ENCODE measurements at regions of chr2 and their contacts with region 1.

Region 1: GRCh38 chr2:16713011-16713423 is 47.4 kb upstream of the CYRIA start:
- DNase-seq: peak; percentile 80
- ATAC-seq: peak; percentile 79
- H3K4me3 ChIP-seq: peak overlapping the region in 2 of 5 experiments; percentile 12 to 37
- H3K4me3 Mint-ChIP-seq: peak overlapping the region; percentile 52
- H3K27ac ChIP-seq: peak overlapping the region; percentile 77 to 84
- H3K27ac Mint-ChIP-seq: peak overlapping the region; percentile 88
- H3K4me1 ChIP-seq: peaks cover 36 to 44% of the 10 kb centered on the region in 2 donors
- H3K4me1 Mint-ChIP-seq: peaks cover 56% of the 10 kb centered on the region
- H3K27me3 ChIP-seq: no peaks in the 10 kb centered on the region
- H3K27me3 Mint-ChIP-seq: no peaks in the 10 kb centered on the region
- CTCF ChIP-seq: no peak

Region 2: DNA sequence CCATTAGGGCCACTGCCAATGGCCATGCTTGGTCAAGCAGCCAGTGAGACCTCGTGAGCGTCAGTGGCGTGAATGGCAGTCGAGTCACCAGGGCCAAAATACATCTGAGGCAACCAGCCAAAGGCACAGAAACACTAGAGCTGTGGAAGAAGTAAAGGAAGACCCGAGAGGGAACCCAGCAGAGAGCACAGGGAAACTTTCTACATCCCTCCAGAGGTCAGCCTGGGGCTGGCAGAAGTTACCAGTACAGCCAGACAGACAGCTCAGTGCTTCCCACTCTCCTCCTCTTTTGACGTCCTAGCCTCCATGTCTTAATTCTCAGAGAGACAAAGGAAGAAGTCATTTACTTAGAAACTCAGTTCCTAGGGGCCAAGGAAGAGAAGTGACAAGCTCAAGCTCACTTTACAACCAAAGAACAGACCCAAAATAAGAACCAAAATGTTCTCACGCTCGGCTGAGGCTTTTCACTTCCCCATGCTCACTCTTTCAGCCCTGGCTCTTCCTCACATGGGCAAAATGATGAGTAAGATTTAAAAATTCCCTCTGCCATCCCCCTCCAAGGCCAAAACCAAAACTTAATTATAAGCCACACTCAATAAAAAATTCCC is 56.1 kb before region 1 on chr2:
- CTCF ChIA-PET with region 1: interaction called, 3 read pairs
- POLR2A ChIA-PET with region 1: no interaction called
- intact Hi-C with region 1: loop called (anchors 2 kb)
- DNase-seq: peak; percentile 82
- ATAC-seq: peak; percentile 65
- H3K4me3 ChIP-seq: peak overlapping the region in 3 of 5 experiments; percentile 16 to 43 (median 33)
- H3K4me3 Mint-ChIP-seq: peak overlapping the region; percentile 84
- H3K27ac ChIP-seq: peak overlapping the region; percentile 66 to 82
- H3K27ac Mint-ChIP-seq: peak overlapping the region; percentile 86
- H3K4me1 ChIP-seq: peaks cover 96 to 99% of the 10 kb centered on the region in 2 donors
- H3K4me1 Mint-ChIP-seq: peaks cover 98% of the 10 kb centered on the region
- H3K27me3 ChIP-seq: no peaks in the 10 kb centered on the region
- H3K27me3 Mint-ChIP-seq: no peaks in the 10 kb centered on the region
- CTCF ChIP-seq: no peak

Region 3: GRCh38 chr2:16682431-16683118 is 30.4 kb before region 1 on chr2:
- CTCF ChIA-PET with region 1: no interaction called
- POLR2A ChIA-PET with region 1: no interaction called
- intact Hi-C with region 1: no loop called
- DNase-seq: no peak
- ATAC-seq: no peak
- H3K4me3 ChIP-seq: no peak overlapping the region
- H3K4me3 Mint-ChIP-seq: no peak overlapping the region
- H3K27ac ChIP-seq: no peak overlapping the region
- H3K27ac Mint-ChIP-seq: no peak overlapping the region
- H3K4me1 ChIP-seq: peaks cover 0 to 1% of the 10 kb centered on the region in 2 donors
- H3K4me1 Mint-ChIP-seq: peaks cover 21% of the 10 kb centered on the region
- H3K27me3 ChIP-seq: no peaks in the 10 kb centered on the region
- H3K27me3 Mint-ChIP-seq: no peaks in the 10 kb centered on the region
- CTCF ChIP-seq: no peak

Region 4: DNA sequence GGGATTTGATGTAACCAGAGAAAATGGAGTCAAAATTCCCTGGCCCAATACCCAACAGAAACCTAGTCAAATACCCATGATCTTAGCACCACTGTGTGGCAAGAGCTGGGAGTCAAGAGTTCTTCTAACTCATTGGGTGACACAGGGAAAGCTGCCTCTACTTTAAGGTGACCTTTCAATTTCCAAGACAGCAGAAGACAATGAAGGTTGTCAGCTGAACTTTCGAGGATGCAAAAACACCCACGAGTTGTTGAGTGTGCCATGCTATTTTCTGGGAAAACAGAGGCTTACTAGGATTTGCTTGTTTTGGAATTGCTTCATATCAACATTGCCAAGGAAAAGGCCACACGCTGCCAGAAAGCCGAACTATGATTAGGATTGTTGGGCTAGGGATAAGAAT is 14.2 kb after region 1 on chr2:
- CTCF ChIA-PET with region 1: interaction called, 4 read pairs
- POLR2A ChIA-PET with region 1: no interaction called
- intact Hi-C with region 1: loop called (anchors 1 kb)
- DNase-seq: no peak
- ATAC-seq: no peak
- H3K4me3 ChIP-seq: no peak overlapping the region
- H3K4me3 Mint-ChIP-seq: no peak overlapping the region
- H3K27ac ChIP-seq: no peak overlapping the region
- H3K27ac Mint-ChIP-seq: no peak overlapping the region
- H3K4me1 ChIP-seq: peaks cover 12 to 20% of the 10 kb centered on the region in 2 donors
- H3K4me1 Mint-ChIP-seq: peaks cover 42% of the 10 kb centered on the region
- H3K27me3 ChIP-seq: no peaks in the 10 kb centered on the region
- H3K27me3 Mint-ChIP-seq: no peaks in the 10 kb centered on the region
- CTCF ChIP-seq: no peak

Measured in B cell (primary cell).